Sigmoid colon (tissue), 7 donors: ENCODE measurements at regions of chrX and their contacts with region 1.

Region 1: GRCh38 chrX:10119399-10119990 is 37.3 kb upstream of the CLCN4 start:
- DNase-seq: peak; percentile 87
- H3K4me3 ChIP-seq: no peak overlapping the region
- H3K27ac ChIP-seq: peak overlapping the region; percentile 23 to 64 (median 44)
- H3K4me1 ChIP-seq: peaks cover 0 to 11% (median 0%) of the 10 kb centered on the region in 4 donors
- H3K27me3 ChIP-seq: no peaks in the 10 kb centered on the region
- CTCF ChIP-seq: peak; percentile 94 to 100 (median 100)
- EP300 ChIP-seq: no peak
- POLR2A ChIP-seq: no peak

Region 2: GRCh38 chrX:9995855-9996339 is 123.6 kb before region 1 on chrX:
- intact Hi-C with region 1: loop called (anchors 1 kb)
- DNase-seq: peak; percentile 92
- H3K4me3 ChIP-seq: no peak overlapping the region
- H3K27ac ChIP-seq: no peak overlapping the region
- H3K4me1 ChIP-seq: peaks cover 0 to 6% (median 0%) of the 10 kb centered on the region in 4 donors
- H3K27me3 ChIP-seq: no peaks in the 10 kb centered on the region
- CTCF ChIP-seq: peak; percentile 84 to 98 (median 98)
- EP300 ChIP-seq: no peak
- POLR2A ChIP-seq: no peak

Region 3: GRCh38 chrX:10083809-10084208 is 35.7 kb before region 1 on chrX:
- intact Hi-C with region 1: loop called (anchors 5 kb)
- DNase-seq: no peak
- H3K4me3 ChIP-seq: no peak overlapping the region
- H3K27ac ChIP-seq: peak overlapping the region; percentile 77 to 82 (median 79)
- H3K4me1 ChIP-seq: peaks cover 0 to 59% (median 39%) of the 10 kb centered on the region in 4 donors
- H3K27me3 ChIP-seq: no peaks in the 10 kb centered on the region
- CTCF ChIP-seq: no peak
- EP300 ChIP-seq: peak in 1 of 4 donors; percentile 8
- POLR2A ChIP-seq: no peak

Region 4: DNA sequence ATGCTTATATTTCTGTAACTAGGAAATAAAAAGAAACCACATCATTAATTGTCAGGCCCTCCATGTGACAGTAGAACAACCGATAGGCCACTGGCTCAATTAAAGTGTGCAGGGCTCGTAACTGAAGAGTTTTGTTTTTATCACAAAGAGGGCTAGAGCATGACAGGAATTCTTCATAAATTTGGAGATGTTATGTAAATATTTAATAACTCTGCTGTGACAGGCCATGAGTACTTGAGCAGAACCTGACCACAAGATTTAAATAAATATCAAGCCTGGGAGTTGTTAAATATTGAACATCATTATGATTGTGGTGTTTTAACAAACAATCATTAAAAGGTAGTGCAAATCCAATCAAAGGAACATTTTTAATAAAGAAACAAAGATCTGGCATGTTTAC is 445.0 kb after region 1 on chrX:
- intact Hi-C with region 1: no loop called
- DNase-seq: no peak
- H3K4me3 ChIP-seq: no peak overlapping the region
- H3K27ac ChIP-seq: peak overlapping the region in 2 of 4 donors; percentile 24 to 37
- H3K4me1 ChIP-seq: peaks cover 0 to 36% (median 4%) of the 10 kb centered on the region in 4 donors
- H3K27me3 ChIP-seq: no peaks in the 10 kb centered on the region
- CTCF ChIP-seq: no peak
- EP300 ChIP-seq: no peak
- POLR2A ChIP-seq: no peak